Activated T-helper 1 cell treated with anti-CD3 and anti-CD28 coated beads, Interleukin-12 subunit alpha, Interleukin-12 subunit beta, Interleukin-2, Interleukin-4 antibody, amounts not matched to agents 30 ng/mL and 10 ng/mL and 1 ng/mL, durations not matched to agents 14 hours and 24 hours and 36 hours (primary cell): ENCODE measurements at regions of chr7 and their contacts with region 1.

Region 1: GRCh38 chr7:36723951-36724664 is at the start of gene AOAH:
- DNase-seq: peak; percentile 78
- H3K4me3 Mint-ChIP-seq: peak within 1 kb of the TSS; percentile 87
- H3K27ac Mint-ChIP-seq: peak within 1 kb of the TSS; percentile 90
- H3K4me1 Mint-ChIP-seq: peaks cover 73% of the 10 kb centered on the region
- H3K27me3 Mint-ChIP-seq: peaks cover 2% of the 10 kb centered on the region
- total RNA-seq, gene AOAH: 12.3 and 14.0 TPM in 2 replicates

Region 2: DNA sequence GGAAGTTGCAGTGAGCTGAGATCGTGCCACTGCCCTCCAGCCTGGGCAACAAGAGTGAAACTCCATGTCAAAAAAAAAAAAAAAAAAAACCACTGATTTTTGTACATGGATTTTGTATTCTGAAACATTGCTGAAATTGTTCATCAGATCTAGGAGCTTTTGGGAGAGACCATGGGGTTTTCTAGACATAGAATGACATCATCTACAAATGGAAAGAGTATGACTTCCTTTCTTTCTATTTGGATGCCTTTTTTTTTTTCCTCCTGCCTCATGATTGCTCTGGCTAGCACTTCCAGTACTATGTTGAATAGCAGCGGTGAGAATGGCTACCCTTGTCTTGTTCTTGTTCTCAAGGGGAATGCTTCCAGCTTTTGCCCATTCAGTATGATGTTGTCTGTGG is 245.4 kb before region 1 on chr7:
- intact Hi-C with region 1: no loop called
- DNase-seq: no peak
- H3K4me3 Mint-ChIP-seq: no peak overlapping the region
- H3K27ac Mint-ChIP-seq: no peak overlapping the region
- H3K4me1 Mint-ChIP-seq: peaks cover 22% of the 10 kb centered on the region
- H3K27me3 Mint-ChIP-seq: peaks cover 4% of the 10 kb centered on the region

Region 3: DNA sequence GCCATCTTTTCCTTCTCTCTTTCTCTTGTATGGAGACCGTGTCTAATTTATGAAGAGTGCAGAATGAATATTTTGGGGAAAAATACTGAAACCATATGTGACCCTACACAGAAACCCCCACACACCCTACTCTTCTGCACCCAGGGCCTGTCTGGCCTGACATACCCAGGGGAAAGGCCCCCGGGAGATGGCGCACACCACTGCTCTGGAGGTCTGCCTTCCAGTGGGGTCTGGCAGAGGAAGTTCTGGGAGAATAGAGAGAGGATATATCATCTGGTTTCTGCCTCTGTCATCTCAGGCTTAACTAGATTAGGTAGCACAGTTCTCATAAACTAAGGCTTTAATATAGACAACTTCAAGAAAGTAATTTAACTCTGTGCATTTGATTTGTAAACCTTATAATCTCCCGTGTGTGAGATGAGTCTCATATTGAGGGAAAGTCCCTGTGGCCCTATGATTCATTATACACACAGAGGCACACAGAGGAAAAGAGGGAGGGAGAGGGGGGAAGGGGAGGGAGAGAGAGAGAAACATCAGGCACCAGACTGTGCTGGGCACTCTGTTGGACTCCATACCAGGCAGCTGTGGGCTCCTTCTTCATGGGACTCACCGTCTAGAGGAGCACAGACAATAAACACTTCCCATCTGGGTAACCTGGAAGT is 123.1 kb before region 1 on chr7:
- intact Hi-C with region 1: loop called (anchors 5 kb)
- DNase-seq: peak; percentile 14
- H3K4me3 Mint-ChIP-seq: no peak overlapping the region
- H3K27ac Mint-ChIP-seq: peak overlapping the region; percentile 54
- H3K4me1 Mint-ChIP-seq: peaks cover 70% of the 10 kb centered on the region
- H3K27me3 Mint-ChIP-seq: no peaks in the 10 kb centered on the region

Region 4: GRCh38 chr7:36707465-36707864 is 16.6 kb before region 1 on chr7:
- intact Hi-C with region 1: loop called (anchors 1 kb)
- DNase-seq: no peak
- H3K4me3 Mint-ChIP-seq: no peak overlapping the region
- H3K27ac Mint-ChIP-seq: peak overlapping the region; percentile 82
- H3K4me1 Mint-ChIP-seq: peaks cover 71% of the 10 kb centered on the region
- H3K27me3 Mint-ChIP-seq: no peaks in the 10 kb centered on the region

Region 5: DNA sequence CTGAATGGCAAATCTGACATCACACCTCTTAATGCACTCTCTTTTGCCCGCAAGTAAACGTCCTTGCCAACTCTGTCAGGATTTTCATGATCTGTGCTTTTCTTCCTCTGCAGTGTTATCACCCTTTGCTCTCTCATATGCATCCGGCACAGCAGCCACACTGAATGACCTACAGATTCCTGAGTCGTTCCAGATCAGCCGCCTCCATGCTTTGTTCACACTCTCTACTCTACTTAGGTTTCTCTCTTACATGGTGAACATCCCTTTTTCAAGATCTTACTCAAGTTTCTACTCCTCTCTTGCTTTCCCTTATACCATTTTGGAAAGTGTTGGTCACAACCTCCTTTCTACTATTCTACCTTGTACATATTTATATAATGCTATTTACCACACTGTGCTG is 127.9 kb after region 1 on chr7:
- intact Hi-C with region 1: loop called (anchors 2 kb)
- DNase-seq: no peak
- H3K4me3 Mint-ChIP-seq: peak overlapping the region; percentile 4
- H3K27ac Mint-ChIP-seq: peak overlapping the region; percentile 83
- H3K4me1 Mint-ChIP-seq: peaks cover 21% of the 10 kb centered on the region
- H3K27me3 Mint-ChIP-seq: no peaks in the 10 kb centered on the region

Region 6: GRCh38 chr7:37181550-37181932 is 457.4 kb after region 1 on chr7:
- intact Hi-C with region 1: loop called (anchors 5 kb)
- DNase-seq: no peak
- H3K4me3 Mint-ChIP-seq: no peak overlapping the region
- H3K27ac Mint-ChIP-seq: no peak overlapping the region
- H3K4me1 Mint-ChIP-seq: peaks cover 20% of the 10 kb centered on the region
- H3K27me3 Mint-ChIP-seq: no peaks in the 10 kb centered on the region